CD14-positive monocyte (primary cell): ENCODE measurements at regions of chr18 and their contacts with region 1.

Region 1: GRCh38 chr18:59918320-59918755 is 18.5 kb downstream of the PMAIP1 start:
- DNase-seq: peak; percentile 44 to 68 (median 53)
- H3K4me3 ChIP-seq: peak overlapping the region in 2 of 3 experiments; percentile 36 to 66
- H3K4me3 Mint-ChIP-seq: peak overlapping the region; percentile 70 to 87
- H3K27ac ChIP-seq: peak overlapping the region; percentile 40
- H3K27ac Mint-ChIP-seq: peak overlapping the region; percentile 80 to 94 (median 93)
- H3K4me1 ChIP-seq: peaks cover 33 to 53% of the 10 kb centered on the region in 2 donors
- H3K4me1 Mint-ChIP-seq: peaks cover 48% of the 10 kb centered on the region
- H3K27me3 ChIP-seq: no peaks in the 10 kb centered on the region
- H3K27me3 Mint-ChIP-seq: no peaks in the 10 kb centered on the region
- CTCF ChIP-seq: no peak

Region 2: DNA sequence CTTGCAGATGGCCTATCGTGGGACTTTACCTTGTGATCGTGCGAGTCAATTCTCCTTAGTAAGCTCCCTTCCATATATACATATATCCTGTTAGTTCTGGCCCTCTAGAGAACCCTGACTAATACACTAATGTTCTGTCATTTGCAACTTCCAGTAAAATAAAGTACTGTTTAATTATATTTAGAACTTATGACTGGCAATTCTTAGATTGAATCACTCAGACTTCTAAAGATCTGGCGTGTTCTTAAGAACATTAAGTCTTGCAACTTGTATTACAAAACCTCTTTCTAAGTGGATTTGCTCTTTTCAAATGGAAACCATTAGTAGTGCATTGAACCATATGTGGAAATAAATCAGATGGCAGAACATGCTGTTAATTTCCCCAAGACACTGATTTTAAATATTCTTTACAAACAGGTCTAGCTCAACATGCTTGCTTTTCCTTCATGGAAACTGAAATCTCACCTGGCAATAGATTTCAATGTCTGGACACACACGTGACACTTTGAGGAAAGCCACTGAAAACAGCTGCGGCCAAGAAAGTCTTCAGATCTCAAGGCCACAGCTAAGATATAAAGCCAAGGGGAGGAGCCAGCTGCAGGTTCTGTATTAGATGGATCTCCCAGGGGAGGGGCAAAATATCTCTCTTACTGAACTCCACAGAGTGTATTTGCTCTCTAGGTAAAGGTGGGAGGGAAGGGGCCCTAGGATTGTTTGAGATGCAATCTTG is 32.0 kb after region 1 on chr18:
- intact Hi-C with region 1: loop called in 1 of 2 experiments (anchors 5 kb)
- DNase-seq: no peak
- H3K4me3 ChIP-seq: no peak overlapping the region
- H3K4me3 Mint-ChIP-seq: no peak overlapping the region
- H3K27ac ChIP-seq: no peak overlapping the region
- H3K27ac Mint-ChIP-seq: no peak overlapping the region
- H3K4me1 ChIP-seq: no peaks in the 10 kb centered on the region
- H3K4me1 Mint-ChIP-seq: peaks cover 6% of the 10 kb centered on the region
- H3K27me3 ChIP-seq: no peaks in the 10 kb centered on the region
- H3K27me3 Mint-ChIP-seq: peaks cover 0 to 2% (median 2%) of the 10 kb centered on the region in 3 donors
- CTCF ChIP-seq: no peak